HepG2 (cell line): ENCODE measurements at regions of chr7 and their contacts with region 1.

Region 1: GRCh38 chr7:156984174-156984891 is 26.1 kb downstream of the MNX1 start:
- DNase-seq: no peak
- ATAC-seq: no peak
- H3K4me3 ChIP-seq: no peak overlapping the region
- H3K27ac ChIP-seq: no peak overlapping the region
- H3K4me1 ChIP-seq: peaks cover 22% of the 10 kb centered on the region
- H3K27me3 ChIP-seq: no peaks in the 10 kb centered on the region
- CTCF ChIP-seq: no peak
- EP300 ChIP-seq: no peak
- POLR2A ChIP-seq: no peak
- RAD21 ChIP-seq: no peak

Region 2: DNA sequence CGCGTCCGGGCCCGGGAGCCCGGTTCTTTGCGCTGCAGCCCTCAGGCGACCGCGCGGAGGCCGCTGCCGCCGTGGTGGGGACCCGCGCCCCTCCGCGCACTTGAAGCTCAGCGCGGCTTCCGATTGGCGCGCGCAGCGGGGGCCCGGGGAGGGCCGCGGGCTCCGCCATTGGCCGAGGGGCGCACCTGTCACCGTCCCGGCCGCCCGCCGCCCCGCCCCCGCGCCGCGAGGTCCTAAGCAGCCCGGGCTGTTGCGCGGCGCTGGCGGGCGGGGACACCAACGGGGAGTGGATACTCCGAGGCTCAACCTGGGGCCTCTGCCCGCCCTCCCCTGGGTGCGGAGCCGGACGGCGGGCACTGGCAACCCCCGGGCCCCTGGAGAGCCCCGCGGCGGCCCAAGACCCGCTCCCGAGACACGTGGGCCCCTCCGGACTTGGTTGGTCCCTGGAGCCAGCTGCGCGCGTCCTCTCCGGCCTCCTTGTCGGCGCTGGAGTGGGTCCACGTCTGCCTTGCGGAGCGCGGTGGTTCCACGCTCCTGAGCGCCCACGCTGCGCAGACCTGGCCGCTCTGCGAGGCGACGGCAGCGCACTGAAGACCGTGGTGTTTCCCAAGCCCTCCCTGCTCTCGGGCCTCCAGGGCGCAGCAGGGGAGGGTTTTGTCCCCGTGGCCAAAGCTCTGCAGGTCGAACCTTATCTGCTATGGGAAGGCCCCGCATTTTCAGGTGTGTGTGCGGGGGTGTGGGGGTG is 26.4 kb after region 1 on chr7 and contains the start of gene MNX1:
- CTCF ChIA-PET with region 1: no interaction called
- POLR2A ChIA-PET with region 1: interaction called, 14 read pairs
- in situ Hi-C with region 1: no loop called
- intact Hi-C with region 1: loop called (anchors 2 kb)
- DNase-seq: peak; percentile 57
- ATAC-seq: peak; percentile 80
- H3K4me3 ChIP-seq: peak within 1 kb of the TSS; percentile 65 to 75 (median 67); a peak in 5 of 6 replicates
- H3K27ac ChIP-seq: peak within 1 kb of the TSS; percentile 83
- H3K4me1 ChIP-seq: peaks cover 66% of the 10 kb centered on the region
- H3K27me3 ChIP-seq: peaks cover 6 to 51% of the 10 kb centered on the region in 2 experiments; a peak in 4 of 5 replicates
- CTCF ChIP-seq: no peak
- EP300 ChIP-seq: no peak
- POLR2A ChIP-seq: peak in 1 of 2 experiments; percentile 67; a peak in 3 of 4 replicates
- RAD21 ChIP-seq: no peak
- total RNA-seq, gene MNX1: 3.6 and 6.1 TPM in 2 replicates

Region 3: DNA sequence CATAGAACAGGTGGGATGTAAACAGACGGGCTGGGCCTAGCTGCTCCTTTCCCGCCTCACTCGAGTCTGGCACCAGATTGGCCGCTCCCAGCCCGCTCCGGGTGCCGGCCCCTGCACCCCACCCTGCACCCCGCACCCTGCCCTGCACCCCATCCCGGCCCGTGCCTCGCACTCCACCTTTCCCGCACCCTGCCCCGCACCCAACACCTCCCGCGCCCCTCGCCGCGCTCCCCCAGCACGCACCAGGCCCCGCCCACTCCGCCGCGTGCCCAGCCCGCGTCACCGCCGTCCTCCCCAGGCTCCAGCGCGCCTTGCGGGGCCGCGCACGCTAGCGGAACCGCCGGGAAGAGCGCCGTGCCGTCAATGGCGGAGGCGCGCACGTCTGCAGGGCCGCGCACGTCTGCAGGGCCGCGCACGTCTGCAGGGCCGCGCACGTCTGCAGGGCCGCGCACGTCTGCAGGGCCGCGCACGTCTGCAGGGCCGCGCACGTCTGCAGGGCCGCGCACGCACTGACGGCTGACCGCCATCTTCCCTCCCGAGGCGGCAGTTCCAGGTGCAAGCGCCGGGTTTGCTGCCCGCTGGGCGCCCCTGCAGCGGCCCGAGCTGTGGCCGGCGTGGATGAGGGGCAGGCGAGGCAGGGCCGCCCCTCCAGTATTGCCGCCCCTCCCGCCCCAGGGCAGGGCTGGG is 154.2 kb after region 1 on chr7 and contains the start of gene UBE3C:
- CTCF ChIA-PET with region 1: no interaction called
- POLR2A ChIA-PET with region 1: interaction called, 3 read pairs
- in situ Hi-C with region 1: no loop called
- intact Hi-C with region 1: loop called (anchors 10 kb)
- DNase-seq: peak; percentile 74
- ATAC-seq: peak; percentile 84
- H3K4me3 ChIP-seq: peak within 1 kb of the TSS; percentile 79 to 93 (median 88)
- H3K27ac ChIP-seq: peak within 1 kb of the TSS; percentile 89
- H3K4me1 ChIP-seq: peaks cover 53% of the 10 kb centered on the region
- H3K27me3 ChIP-seq: no peaks in the 10 kb centered on the region; a peak in 1 of 5 replicates
- CTCF ChIP-seq: no peak
- EP300 ChIP-seq: no peak
- POLR2A ChIP-seq: peak; percentile 46 to 84; a peak in 3 of 4 replicates
- RAD21 ChIP-seq: peak; percentile 54; the same call in 1 of the 2 replicates
- total RNA-seq, gene UBE3C: 48.2 and 49.8 TPM in 2 replicates